Astrocyte of the cerebellum (primary cell): ENCODE measurements at regions of chr12 and their contacts with region 1.

Region 1: DNA sequence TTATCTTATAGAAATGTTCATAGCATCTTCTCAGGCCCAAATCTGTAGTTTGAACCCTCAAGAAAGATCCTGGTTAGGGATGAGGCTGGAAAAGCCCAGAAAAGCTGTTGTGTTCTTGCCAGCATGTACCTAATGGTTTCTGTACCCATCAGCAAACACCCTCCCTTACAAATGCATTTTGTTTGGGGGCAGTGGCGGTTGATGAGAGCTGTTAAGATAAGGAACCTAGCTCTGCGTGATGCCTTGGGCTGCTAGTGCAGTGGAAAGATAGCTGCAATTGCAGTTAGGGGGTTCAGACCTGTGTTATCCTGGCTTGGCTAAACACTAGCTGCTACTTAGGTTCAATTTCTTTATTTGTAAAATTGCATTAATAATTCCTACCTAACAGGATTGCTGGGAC is 3.6 kb downstream of the TPH2 start:
- DNase-seq: no peak
- H3K4me3 ChIP-seq: no peak overlapping the region
- CTCF ChIP-seq: no peak

Region 2: DNA sequence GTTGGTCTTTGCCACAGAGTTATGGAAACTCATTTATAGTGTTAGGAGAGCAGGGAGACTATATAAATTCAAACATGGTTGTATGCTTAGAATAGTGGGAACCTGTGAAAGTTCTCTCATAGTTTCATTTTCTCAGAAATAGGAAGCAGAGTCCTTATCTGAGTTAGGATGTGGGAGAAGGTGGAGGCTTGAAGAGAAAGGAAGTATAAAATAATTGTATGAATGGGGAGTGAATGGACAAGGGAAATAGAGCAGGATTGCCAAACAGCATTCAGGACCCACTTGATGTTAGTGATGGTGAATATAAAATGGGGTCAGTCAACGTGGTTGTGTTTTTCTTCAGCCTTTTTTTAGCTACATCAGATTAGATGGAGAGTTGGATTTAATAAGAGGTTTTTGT is 37.6 kb before region 1 on chr12:
- in situ Hi-C with region 1: loop called (anchors 5 kb)
- DNase-seq: no peak
- H3K4me3 ChIP-seq: no peak overlapping the region
- CTCF ChIP-seq: no peak

Region 3: DNA sequence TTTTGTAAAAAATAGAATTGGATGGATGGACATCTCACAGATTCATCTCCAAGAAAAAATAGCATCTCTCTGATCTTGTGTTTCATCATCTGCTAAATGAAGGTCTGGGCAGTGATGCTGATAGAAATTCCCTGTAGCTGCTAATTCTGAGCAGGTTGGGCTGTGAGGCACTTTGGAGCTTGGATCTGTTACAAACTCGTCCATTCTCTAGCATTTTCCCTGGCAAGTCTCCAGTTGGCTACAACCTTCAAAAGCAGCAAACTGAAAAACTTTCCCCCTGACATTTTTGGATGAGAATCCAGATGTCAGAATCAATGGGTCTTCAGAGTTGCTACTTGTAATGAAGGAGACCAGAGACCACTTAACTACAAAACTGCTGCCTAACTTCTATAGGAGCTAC is 69.1 kb after region 1 on chr12:
- in situ Hi-C with region 1: no loop called
- DNase-seq: no peak
- H3K4me3 ChIP-seq: no peak overlapping the region
- CTCF ChIP-seq: no peak